ENCODE measurements at regions of chr5 and their contacts with region 1.

Region 1: GRCh38 chr5:151164686-151165392 is 7.3 kb upstream of the ANXA6 start:
- H3K4me3 ChIP-seq: no peak overlapping the region
- H3K27ac ChIP-seq: no peak overlapping the region
- H3K4me1 ChIP-seq: no peaks in the 10 kb centered on the region
- CTCF ChIP-seq: peak; percentile 74

Region 2: DNA sequence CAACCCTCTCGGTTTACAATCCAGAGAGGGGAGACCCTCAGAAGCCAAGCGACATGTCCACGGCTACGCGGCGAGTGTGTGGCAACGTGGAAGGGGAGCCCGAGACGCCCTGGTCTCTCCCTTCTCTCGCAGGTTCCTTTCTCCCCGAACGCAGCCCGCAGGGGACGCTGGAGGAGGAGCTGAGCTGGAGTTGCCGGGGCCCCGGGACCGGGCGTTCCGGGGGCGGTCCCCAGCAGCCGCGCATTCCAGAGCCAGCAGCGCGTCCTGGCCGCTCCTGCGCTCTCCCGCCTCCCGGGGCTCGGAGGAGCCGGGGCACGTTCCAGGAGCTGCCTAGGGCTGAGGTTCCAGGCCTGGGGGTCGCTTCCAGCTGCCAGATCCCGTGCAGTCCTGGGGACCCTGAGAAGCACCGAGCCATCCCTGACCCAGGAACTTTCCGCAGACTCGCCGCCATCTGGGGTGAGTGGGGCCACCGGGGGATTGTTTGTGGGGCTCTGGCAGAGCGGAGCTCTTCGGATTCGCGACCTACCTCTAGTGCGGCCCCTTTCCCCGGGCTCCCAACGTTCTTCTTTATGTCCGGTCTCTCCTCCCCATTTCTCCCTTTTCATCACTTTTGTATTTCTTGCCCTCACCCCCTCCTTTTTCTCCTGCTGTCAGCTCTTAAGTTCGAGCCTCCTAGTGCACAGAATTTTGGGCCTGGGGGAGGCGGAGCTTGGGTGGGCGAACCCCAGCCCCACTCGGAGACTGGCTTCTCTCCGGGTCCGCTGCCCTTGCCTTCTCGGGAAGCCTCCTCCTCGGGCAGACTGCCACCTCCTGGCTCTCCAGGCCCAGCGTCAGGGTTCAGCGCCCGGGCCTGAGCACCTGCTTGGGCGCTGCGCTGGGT is 386.1 kb before region 1 on chr5 and contains the start of gene SMIM3:
- CTCF ChIA-PET with region 1: no interaction called
- POLR2A ChIA-PET with region 1: no interaction called
- H3K4me3 ChIP-seq: peak within 1 kb of the TSS; percentile 64
- H3K27ac ChIP-seq: peak within 1 kb of the TSS; percentile 33; the same call in 1 of the 2 replicates
- H3K4me1 ChIP-seq: peaks cover 11% of the 10 kb centered on the region
- CTCF ChIP-seq: peak; percentile 70

Region 3: DNA sequence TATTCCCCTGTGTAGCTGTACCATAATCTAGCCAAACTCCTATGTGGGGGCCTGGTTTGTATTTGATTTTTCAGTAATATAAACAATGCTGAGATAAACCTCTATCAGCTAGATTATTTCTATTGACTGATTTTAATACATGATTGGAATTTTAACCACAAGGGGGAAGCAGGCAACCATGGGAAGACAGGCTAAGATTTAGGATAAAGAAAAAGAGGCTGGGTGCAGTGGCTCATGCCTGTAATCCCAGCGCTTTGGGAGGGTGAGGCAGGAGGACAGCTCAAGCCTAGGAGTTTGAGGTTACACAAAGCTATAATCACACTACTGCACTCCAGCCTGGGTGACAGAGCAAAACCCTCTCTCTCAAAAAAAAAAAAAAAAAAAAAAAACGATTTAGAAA is 162.6 kb before region 1 on chr5:
- CTCF ChIA-PET with region 1: interaction called, 23 read pairs
- POLR2A ChIA-PET with region 1: interaction called, 3 read pairs
- H3K4me3 ChIP-seq: no peak overlapping the region
- H3K27ac ChIP-seq: no peak overlapping the region
- H3K4me1 ChIP-seq: no peaks in the 10 kb centered on the region
- CTCF ChIP-seq: no peak

Region 4: DNA sequence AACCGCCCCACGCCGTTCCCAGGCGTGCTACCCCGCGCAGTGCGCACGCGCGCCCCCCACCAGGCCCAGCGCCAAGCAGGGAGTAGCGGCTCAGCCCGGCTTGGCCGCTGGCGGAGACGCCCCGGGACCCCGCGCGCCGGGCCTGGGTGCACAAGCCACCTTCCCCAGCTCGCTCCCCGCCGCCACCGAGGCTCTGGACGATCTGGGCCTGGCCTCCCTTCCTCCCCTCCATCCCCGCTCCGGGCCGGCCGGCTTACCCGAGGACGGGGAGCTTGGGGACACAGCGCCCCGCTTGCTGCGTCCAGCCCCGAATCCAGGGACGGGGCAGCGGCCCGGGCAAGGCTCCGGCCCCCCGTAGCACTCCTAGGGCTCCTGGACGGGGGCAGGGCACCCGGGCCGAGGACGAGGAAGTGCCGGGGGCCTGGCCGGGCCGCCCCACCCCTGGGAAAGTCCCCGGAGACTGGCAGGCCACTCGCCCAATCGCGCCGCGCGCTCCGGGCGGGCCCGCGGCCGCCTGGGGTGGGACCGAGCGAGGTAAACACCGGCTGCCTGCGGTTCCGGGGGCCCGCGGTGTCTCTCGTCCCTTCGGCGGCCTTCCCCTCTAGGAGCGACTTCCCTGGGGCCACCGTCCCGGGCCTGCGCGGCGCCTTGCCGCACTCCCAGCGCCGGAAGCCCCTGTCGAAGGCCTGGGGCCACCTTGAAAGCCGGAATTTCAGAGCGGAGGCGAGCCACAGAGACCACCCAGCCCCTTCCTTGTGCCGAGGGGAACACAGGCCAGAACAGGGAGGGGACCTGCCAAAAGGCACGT is 84.0 kb before region 1 on chr5 and contains the start of gene TNIP1:
- CTCF ChIA-PET with region 1: interaction called, 10 read pairs
- POLR2A ChIA-PET with region 1: no interaction called
- H3K4me3 ChIP-seq: peak within 1 kb of the TSS; percentile 98
- H3K27ac ChIP-seq: peak within 1 kb of the TSS; percentile 96
- H3K4me1 ChIP-seq: peaks cover 6% of the 10 kb centered on the region; the same call in 1 of the 2 replicates
- CTCF ChIP-seq: peak; percentile 82

Region 5: GRCh38 chr5:151126199-151126645 is 38.6 kb before region 1 on chr5:
- CTCF ChIA-PET with region 1: interaction called, 278 read pairs
- POLR2A ChIA-PET with region 1: interaction called, 6 read pairs
- H3K4me3 ChIP-seq: no peak overlapping the region
- H3K27ac ChIP-seq: no peak overlapping the region
- H3K4me1 ChIP-seq: no peaks in the 10 kb centered on the region
- CTCF ChIP-seq: peak; percentile 83

Region 6: GRCh38 chr5:151141535-151141934 is 23.3 kb before region 1 on chr5:
- CTCF ChIA-PET with region 1: interaction called, 11 read pairs
- POLR2A ChIA-PET with region 1: no interaction called
- H3K4me3 ChIP-seq: no peak overlapping the region
- H3K27ac ChIP-seq: no peak overlapping the region
- H3K4me1 ChIP-seq: no peaks in the 10 kb centered on the region
- CTCF ChIP-seq: no peak

Region 7: DNA sequence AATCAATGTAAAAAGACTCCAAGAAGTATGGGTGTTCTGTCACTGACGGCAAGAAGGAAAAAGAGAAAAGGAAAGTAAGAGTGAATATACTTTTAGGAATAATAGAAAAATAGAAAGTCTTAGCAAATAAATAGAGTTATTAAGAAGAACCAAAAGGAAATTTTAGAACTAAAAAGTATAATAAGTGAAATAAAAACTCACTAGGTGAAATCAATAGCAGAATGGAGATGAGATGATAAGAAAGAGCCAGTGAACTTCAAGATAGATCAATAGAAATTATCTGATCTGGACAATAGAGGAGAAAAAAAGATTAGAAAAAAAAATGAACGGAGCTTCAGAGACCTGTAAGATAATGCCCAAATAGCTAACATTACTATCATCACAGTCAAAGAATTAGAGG is 24.3 kb after region 1 on chr5:
- CTCF ChIA-PET with region 1: no interaction called
- POLR2A ChIA-PET with region 1: no interaction called
- H3K4me3 ChIP-seq: no peak overlapping the region
- H3K27ac ChIP-seq: no peak overlapping the region
- H3K4me1 ChIP-seq: no peaks in the 10 kb centered on the region
- CTCF ChIP-seq: no peak

Region 8: GRCh38 chr5:151239237-151239861 is 74.5 kb after region 1 on chr5:
- CTCF ChIA-PET with region 1: interaction called, 19 read pairs
- POLR2A ChIA-PET with region 1: interaction called, 5 read pairs
- H3K4me3 ChIP-seq: no peak overlapping the region
- H3K27ac ChIP-seq: no peak overlapping the region
- H3K4me1 ChIP-seq: no peaks in the 10 kb centered on the region
- CTCF ChIP-seq: peak; percentile 61